HepG2 (cell line): ENCODE measurements at regions of chr6 and their contacts with region 1.

Region 1: GRCh38 chr6:142378138-142378875 is 76.5 kb downstream of the ADGRG6 start:
- DNase-seq: peak; percentile 87
- ATAC-seq: peak; percentile 11; the same call in 2 of the 3 replicates
- H3K4me3 ChIP-seq: no peak overlapping the region
- H3K27ac ChIP-seq: peak overlapping the region; percentile 73
- H3K4me1 ChIP-seq: peaks cover 77% of the 10 kb centered on the region
- H3K27me3 ChIP-seq: no peaks in the 10 kb centered on the region
- CTCF ChIP-seq: no peak
- EP300 ChIP-seq: peak in 1 of 2 experiments; percentile 77; a peak in 2 of 4 replicates
- POLR2A ChIP-seq: no peak
- RAD21 ChIP-seq: no peak

Region 2: GRCh38 chr6:142013286-142013685 is 365.0 kb before region 1 on chr6:
- CTCF ChIA-PET with region 1: no interaction called
- POLR2A ChIA-PET with region 1: no interaction called
- in situ Hi-C with region 1: no loop called
- intact Hi-C with region 1: no loop called
- DNase-seq: no peak
- ATAC-seq: no peak
- H3K4me3 ChIP-seq: no peak overlapping the region
- H3K27ac ChIP-seq: no peak overlapping the region
- H3K4me1 ChIP-seq: no peaks in the 10 kb centered on the region
- H3K27me3 ChIP-seq: peaks cover 2 to 11% of the 10 kb centered on the region in 2 experiments; a peak in 1 of 5 replicates
- CTCF ChIP-seq: no peak
- EP300 ChIP-seq: no peak
- POLR2A ChIP-seq: no peak
- RAD21 ChIP-seq: no peak

Region 3: GRCh38 chr6:142279350-142280180 is 98.7 kb before region 1 on chr6:
- CTCF ChIA-PET with region 1: no interaction called
- POLR2A ChIA-PET with region 1: interaction called, 10 read pairs
- in situ Hi-C with region 1: no loop called
- intact Hi-C with region 1: no loop called
- DNase-seq: peak; percentile 81
- ATAC-seq: peak; percentile 76
- H3K4me3 ChIP-seq: peak overlapping the region in 1 of 3 experiments; percentile 6; a peak in 1 of 6 replicates
- H3K27ac ChIP-seq: peak overlapping the region; percentile 46
- H3K4me1 ChIP-seq: peaks cover 37% of the 10 kb centered on the region
- H3K27me3 ChIP-seq: no peaks in the 10 kb centered on the region
- CTCF ChIP-seq: no peak
- EP300 ChIP-seq: peak in 1 of 2 experiments; percentile 80; a peak in 2 of 4 replicates
- POLR2A ChIP-seq: no peak
- RAD21 ChIP-seq: no peak

Region 4: GRCh38 chr6:142331075-142331551 is 47.2 kb before region 1 on chr6:
- CTCF ChIA-PET with region 1: no interaction called
- POLR2A ChIA-PET with region 1: interaction called, 15 read pairs
- in situ Hi-C with region 1: no loop called
- intact Hi-C with region 1: loop called (anchors 1 kb)
- DNase-seq: peak; percentile 100
- ATAC-seq: peak; percentile 97
- H3K4me3 ChIP-seq: peak overlapping the region; percentile 21 to 36 (median 34); a peak in 4 of 6 replicates
- H3K27ac ChIP-seq: peak overlapping the region; percentile 80
- H3K4me1 ChIP-seq: peaks cover 98% of the 10 kb centered on the region
- H3K27me3 ChIP-seq: no peaks in the 10 kb centered on the region
- CTCF ChIP-seq: no peak
- EP300 ChIP-seq: peak; percentile 46 to 99; a peak in 3 of 4 replicates
- POLR2A ChIP-seq: no peak
- RAD21 ChIP-seq: peak; percentile 27; the same call in 1 of the 2 replicates

Region 5: GRCh38 chr6:142361782-142362750 is 16.2 kb before region 1 on chr6:
- CTCF ChIA-PET with region 1: no interaction called
- POLR2A ChIA-PET with region 1: interaction called, 10 read pairs
- in situ Hi-C with region 1: no loop called
- intact Hi-C with region 1: loop called (anchors 2 kb)
- DNase-seq: peak; percentile 94
- ATAC-seq: peak; percentile 88
- H3K4me3 ChIP-seq: no peak overlapping the region
- H3K27ac ChIP-seq: peak overlapping the region; percentile 13
- H3K4me1 ChIP-seq: peaks cover 53% of the 10 kb centered on the region
- H3K27me3 ChIP-seq: no peaks in the 10 kb centered on the region
- CTCF ChIP-seq: no peak
- EP300 ChIP-seq: peak in 1 of 2 experiments; percentile 51; a peak in 1 of 4 replicates
- POLR2A ChIP-seq: no peak
- RAD21 ChIP-seq: no peak